CD4-positive, alpha-beta T cell (primary cell): ENCODE measurements at regions of chr9 and their contacts with region 1.

Region 1: GRCh38 chr9:6055213-6055612 is 39.8 kb upstream of the RANBP6 start:
- DNase-seq: peak in 7 of 14 experiments; percentile 16 to 79 (median 48)
- ATAC-seq: peak; percentile 74
- H3K4me3 ChIP-seq: no peak overlapping the region
- H3K4me3 Mint-ChIP-seq: no peak overlapping the region
- H3K27ac ChIP-seq: no peak overlapping the region
- H3K27ac Mint-ChIP-seq: no peak overlapping the region
- H3K4me1 ChIP-seq: peaks cover 4% of the 10 kb centered on the region
- H3K4me1 Mint-ChIP-seq: peaks cover 4% of the 10 kb centered on the region
- H3K27me3 ChIP-seq: no peaks in the 10 kb centered on the region
- H3K27me3 Mint-ChIP-seq: no peaks in the 10 kb centered on the region
- CTCF ChIP-seq: peak; percentile 27

Region 2: GRCh38 chr9:5799314-5799713 is 255.9 kb before region 1 on chr9:
- CTCF ChIA-PET with region 1: no interaction called
- POLR2A ChIA-PET with region 1: no interaction called
- intact Hi-C with region 1: loop called in 1 of 2 experiments (anchors 5 kb)
- DNase-seq: peak in 4 of 14 experiments; percentile 14 to 40 (median 30)
- ATAC-seq: no peak
- H3K4me3 ChIP-seq: no peak overlapping the region
- H3K4me3 Mint-ChIP-seq: no peak overlapping the region
- H3K27ac ChIP-seq: no peak overlapping the region
- H3K27ac Mint-ChIP-seq: no peak overlapping the region
- H3K4me1 ChIP-seq: no peaks in the 10 kb centered on the region
- H3K4me1 Mint-ChIP-seq: peaks cover 16% of the 10 kb centered on the region
- H3K27me3 ChIP-seq: no peaks in the 10 kb centered on the region
- H3K27me3 Mint-ChIP-seq: no peaks in the 10 kb centered on the region
- CTCF ChIP-seq: peak; percentile 52

Region 3: GRCh38 chr9:5886114-5886939 is 168.9 kb before region 1 on chr9:
- CTCF ChIA-PET with region 1: interaction called, 6 read pairs
- POLR2A ChIA-PET with region 1: interaction called, 6 read pairs
- intact Hi-C with region 1: loop called (anchors 1 kb)
- DNase-seq: peak; percentile 66 to 86 (median 73)
- ATAC-seq: peak; percentile 94
- H3K4me3 ChIP-seq: no peak overlapping the region
- H3K4me3 Mint-ChIP-seq: no peak overlapping the region
- H3K27ac ChIP-seq: no peak overlapping the region
- H3K27ac Mint-ChIP-seq: no peak overlapping the region
- H3K4me1 ChIP-seq: peaks cover 10% of the 10 kb centered on the region
- H3K4me1 Mint-ChIP-seq: no peaks in the 10 kb centered on the region
- H3K27me3 ChIP-seq: no peaks in the 10 kb centered on the region
- H3K27me3 Mint-ChIP-seq: no peaks in the 10 kb centered on the region
- CTCF ChIP-seq: peak; percentile 90

Region 4: DNA sequence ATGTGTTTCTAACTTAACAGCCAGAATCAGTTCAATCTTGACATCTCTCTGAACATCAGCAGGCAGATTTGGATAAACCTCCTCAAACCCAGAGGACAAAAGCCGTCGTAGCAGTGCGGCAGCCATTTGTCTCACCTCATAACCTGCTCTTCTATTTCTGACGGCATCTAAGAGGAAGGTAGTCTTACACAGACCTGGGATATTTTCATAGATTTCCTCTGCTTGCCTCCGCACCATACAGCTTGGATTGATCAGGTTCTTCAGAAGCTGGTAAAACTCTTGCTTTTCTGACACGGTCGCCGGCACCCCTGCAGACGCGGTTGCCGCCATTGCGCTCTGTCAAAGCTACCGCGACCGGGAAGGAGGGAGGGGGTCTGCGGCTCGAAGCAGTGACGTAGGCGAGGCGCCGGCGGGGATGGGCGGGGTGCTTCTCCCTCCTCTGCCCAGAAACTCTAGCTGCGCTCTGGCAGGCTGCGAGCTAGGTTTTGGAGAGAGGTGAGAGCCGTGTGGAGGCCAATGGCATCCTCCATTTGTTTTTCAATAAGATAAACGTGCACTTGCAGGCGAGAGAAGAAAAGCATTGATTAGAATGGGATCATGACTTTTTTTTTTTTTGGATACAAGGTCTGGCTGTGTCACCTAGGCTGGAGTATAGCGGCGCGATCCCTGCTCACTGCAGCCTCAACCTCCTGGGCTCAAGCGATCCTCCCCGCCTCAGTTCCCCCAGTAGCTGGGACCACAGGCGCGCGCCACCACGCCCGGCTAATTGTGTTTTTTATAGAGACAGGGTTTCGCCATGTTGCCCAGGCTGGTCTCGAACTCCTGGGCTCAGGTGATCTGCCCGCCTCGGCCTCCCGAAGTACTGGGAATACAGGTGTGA is 39.7 kb before region 1 on chr9 and contains the start of gene RANBP6:
- CTCF ChIA-PET with region 1: no interaction called
- POLR2A ChIA-PET with region 1: no interaction called
- intact Hi-C with region 1: loop called (anchors 2 to 5 kb)
- DNase-seq: peak; percentile 82 to 95 (median 89)
- ATAC-seq: peak; percentile 98
- H3K4me3 ChIP-seq: peak within 1 kb of the TSS; percentile 86
- H3K4me3 Mint-ChIP-seq: peak within 1 kb of the TSS; percentile 94
- H3K27ac ChIP-seq: peak within 1 kb of the TSS; percentile 72 to 83
- H3K27ac Mint-ChIP-seq: peak within 1 kb of the TSS; percentile 97
- H3K4me1 ChIP-seq: peaks cover 18% of the 10 kb centered on the region
- H3K4me1 Mint-ChIP-seq: peaks cover 41% of the 10 kb centered on the region
- H3K27me3 ChIP-seq: no peaks in the 10 kb centered on the region
- H3K27me3 Mint-ChIP-seq: no peaks in the 10 kb centered on the region
- CTCF ChIP-seq: no peak
- total RNA-seq, gene RANBP6: 36.7 to 40.6 TPM

Region 5: DNA sequence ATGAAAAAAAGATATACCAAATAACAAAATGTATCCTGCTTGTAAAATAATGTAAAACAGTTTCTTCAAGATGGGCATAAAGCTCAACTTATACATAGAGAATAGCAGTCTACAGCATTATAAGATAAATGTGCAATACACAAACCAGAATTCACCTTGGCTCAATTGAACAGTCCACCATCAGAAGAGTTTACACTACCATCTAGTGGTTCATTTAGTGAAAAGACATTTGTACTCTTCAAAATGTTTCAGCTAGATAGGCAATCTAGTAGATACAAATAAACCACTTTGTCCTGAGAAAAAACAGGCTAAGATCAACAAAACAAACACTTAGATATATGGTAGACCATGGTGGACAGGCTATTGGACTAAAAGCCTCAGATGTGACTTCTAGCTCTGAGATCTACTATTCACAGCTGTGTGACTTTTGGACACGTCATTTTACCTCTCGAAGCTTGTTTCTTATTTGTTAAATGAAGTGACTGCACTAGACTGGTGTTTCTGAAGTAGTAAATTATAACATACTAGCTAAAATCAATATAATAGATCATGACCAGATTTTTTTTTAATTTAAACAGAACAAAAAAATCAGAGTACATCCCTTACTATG is 250.8 kb after region 1 on chr9:
- CTCF ChIA-PET with region 1: interaction called, 8 read pairs
- POLR2A ChIA-PET with region 1: no interaction called
- intact Hi-C with region 1: loop called (anchors 1 to 5 kb)
- DNase-seq: peak in 3 of 14 experiments; percentile 9 to 35 (median 32)
- ATAC-seq: no peak
- H3K4me3 ChIP-seq: no peak overlapping the region
- H3K4me3 Mint-ChIP-seq: no peak overlapping the region
- H3K27ac ChIP-seq: no peak overlapping the region
- H3K27ac Mint-ChIP-seq: no peak overlapping the region
- H3K4me1 ChIP-seq: no peaks in the 10 kb centered on the region
- H3K4me1 Mint-ChIP-seq: no peaks in the 10 kb centered on the region
- H3K27me3 ChIP-seq: peaks cover 3 to 20% of the 10 kb centered on the region in 2 experiments
- H3K27me3 Mint-ChIP-seq: peaks cover 16% of the 10 kb centered on the region
- CTCF ChIP-seq: no peak

Region 6: DNA sequence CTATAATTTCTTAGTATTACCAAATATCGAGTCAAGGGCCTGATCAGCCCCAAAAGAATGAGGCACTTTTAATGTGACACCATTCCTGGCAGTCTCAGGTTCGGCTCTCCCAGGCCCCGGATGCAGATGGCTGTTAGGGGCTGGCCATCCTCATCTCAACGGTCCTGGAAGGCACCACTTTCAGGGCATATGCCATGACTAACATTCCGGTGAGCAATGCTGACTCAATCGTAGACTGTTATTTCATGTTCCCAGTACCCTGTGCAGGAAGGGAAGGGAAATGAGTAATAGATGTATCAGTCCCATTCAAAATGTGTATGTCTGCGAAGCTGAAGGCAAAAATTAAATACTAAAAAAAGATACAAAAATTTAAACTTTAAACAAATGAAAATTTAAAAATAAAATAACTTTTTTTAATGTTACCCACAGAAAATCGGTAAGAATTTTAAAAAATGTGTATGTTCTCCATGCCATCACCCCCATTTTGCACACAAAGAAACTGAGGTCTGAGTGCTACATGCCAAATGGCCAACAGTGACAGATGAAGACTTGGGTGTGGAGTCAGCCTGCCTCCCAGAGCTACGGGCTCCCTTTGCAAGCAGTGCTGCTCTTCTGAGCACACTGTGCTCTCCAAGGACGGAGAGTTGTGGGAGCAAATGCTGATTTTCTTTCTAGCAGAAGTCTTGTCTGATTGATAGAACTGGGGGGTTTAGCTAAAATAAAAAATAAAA is 511.4 kb after region 1 on chr9:
- CTCF ChIA-PET with region 1: no interaction called
- POLR2A ChIA-PET with region 1: no interaction called
- intact Hi-C with region 1: loop called (anchors 1 kb)
- DNase-seq: peak in 3 of 14 experiments; percentile 12 to 56 (median 27)
- ATAC-seq: no peak
- H3K4me3 ChIP-seq: no peak overlapping the region
- H3K4me3 Mint-ChIP-seq: no peak overlapping the region
- H3K27ac ChIP-seq: no peak overlapping the region
- H3K27ac Mint-ChIP-seq: no peak overlapping the region
- H3K4me1 ChIP-seq: peaks cover 6% of the 10 kb centered on the region
- H3K4me1 Mint-ChIP-seq: no peaks in the 10 kb centered on the region
- H3K27me3 ChIP-seq: no peaks in the 10 kb centered on the region
- H3K27me3 Mint-ChIP-seq: peaks cover 7% of the 10 kb centered on the region
- CTCF ChIP-seq: no peak